Activated CD8-positive, alpha-beta T cell treated with anti-CD3 and anti-CD28 coated beads for 36 hours (primary cell): ENCODE measurements at regions of chr10 and their contacts with region 1.

Region 1: DNA sequence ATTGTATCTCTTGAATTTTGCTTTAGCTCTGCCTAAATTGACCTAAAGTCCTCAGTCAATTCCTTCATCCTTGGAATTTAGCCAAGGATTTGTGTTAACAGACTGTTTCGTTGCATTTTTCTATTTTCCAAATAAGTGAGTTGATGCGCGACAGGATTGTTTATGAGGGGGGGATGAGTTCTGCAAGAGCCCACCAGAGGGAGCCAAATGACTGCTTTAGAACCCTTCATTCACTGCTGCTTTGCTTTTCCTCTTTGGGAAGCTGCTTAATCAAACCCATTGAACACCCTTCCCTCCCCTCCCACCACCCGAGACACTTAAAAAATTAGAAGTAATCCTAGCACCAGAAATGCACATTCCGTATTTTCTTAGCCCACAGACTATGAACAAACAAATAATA is 33.7 kb upstream of the PTF1A start:
- DNase-seq: peak; percentile 66
- ATAC-seq: peak; percentile 66
- H3K4me3 Mint-ChIP-seq: no peak overlapping the region
- H3K27ac Mint-ChIP-seq: no peak overlapping the region
- H3K4me1 Mint-ChIP-seq: peaks cover 3% of the 10 kb centered on the region
- H3K27me3 Mint-ChIP-seq: peaks cover 23% of the 10 kb centered on the region
- CTCF ChIP-seq: peak; percentile 92

Region 2: DNA sequence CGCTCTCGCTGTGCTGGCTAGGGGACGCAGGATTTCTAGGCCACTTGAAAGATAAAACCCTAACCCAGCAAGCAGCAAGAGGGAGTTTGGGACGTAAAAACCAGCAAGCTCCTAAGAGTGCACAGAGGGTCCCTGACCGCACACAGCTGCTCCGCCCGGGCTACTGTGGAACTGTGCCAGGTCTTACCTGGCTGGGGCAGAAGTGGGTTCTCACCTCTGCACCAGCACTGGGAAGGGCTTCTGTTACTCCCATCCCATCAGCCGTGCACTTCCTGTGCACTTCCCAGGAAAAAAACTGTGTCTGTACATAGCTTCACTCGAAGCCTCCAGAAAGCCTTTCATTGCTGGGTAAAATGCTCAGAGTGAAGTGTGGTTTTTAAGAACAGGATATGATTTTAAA is 12.1 kb before region 1 on chr10:
- CTCF ChIA-PET with region 1: interaction called, 20 read pairs
- POLR2A ChIA-PET with region 1: no interaction called
- intact Hi-C with region 1: no loop called
- DNase-seq: no peak
- ATAC-seq: no peak
- H3K4me3 Mint-ChIP-seq: no peak overlapping the region
- H3K27ac Mint-ChIP-seq: no peak overlapping the region
- H3K4me1 Mint-ChIP-seq: no peaks in the 10 kb centered on the region
- H3K27me3 Mint-ChIP-seq: peaks cover 10% of the 10 kb centered on the region
- CTCF ChIP-seq: no peak

Region 3: DNA sequence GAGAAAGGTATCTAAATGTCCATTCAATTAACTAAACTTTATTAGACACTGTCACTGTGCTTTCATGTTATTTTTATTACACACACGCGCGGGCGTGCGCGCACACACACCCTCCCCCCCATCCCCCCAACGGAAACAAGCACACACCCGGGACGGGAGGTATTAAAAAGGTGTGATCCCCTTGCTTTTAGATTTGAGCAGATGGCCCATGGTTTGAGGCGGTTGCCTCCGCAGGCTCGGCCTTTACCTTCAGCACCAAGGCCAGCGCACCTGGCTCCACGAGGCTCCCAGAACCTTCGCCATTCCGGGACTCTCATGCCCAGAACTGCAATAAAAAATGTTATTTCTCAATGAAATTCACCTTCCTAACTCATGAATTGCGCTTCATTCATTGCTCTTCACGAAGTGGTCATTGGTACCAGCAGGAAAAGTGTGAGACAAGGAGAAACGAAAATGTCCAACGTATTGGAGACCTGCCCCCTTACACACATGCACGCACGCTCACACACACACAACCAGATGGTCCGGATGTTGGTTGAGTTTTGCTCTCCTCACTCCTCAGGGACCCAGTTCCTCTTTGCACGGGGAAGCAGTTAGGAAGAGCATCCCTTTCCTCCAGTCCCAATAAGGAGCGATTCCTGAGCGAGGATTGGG is 13.0 kb after region 1 on chr10:
- CTCF ChIA-PET with region 1: interaction called, 21 read pairs
- POLR2A ChIA-PET with region 1: no interaction called
- intact Hi-C with region 1: no loop called
- DNase-seq: no peak
- ATAC-seq: no peak
- H3K4me3 Mint-ChIP-seq: no peak overlapping the region
- H3K27ac Mint-ChIP-seq: no peak overlapping the region
- H3K4me1 Mint-ChIP-seq: peaks cover 6% of the 10 kb centered on the region
- H3K27me3 Mint-ChIP-seq: peaks cover 54% of the 10 kb centered on the region
- CTCF ChIP-seq: no peak

Region 4: GRCh38 chr10:23280420-23281043 is 122.2 kb after region 1 on chr10:
- CTCF ChIA-PET with region 1: interaction called, 11 read pairs
- POLR2A ChIA-PET with region 1: no interaction called
- intact Hi-C with region 1: no loop called
- DNase-seq: no peak
- ATAC-seq: no peak
- H3K4me3 Mint-ChIP-seq: no peak overlapping the region
- H3K27ac Mint-ChIP-seq: no peak overlapping the region
- H3K4me1 Mint-ChIP-seq: no peaks in the 10 kb centered on the region
- H3K27me3 Mint-ChIP-seq: peaks cover 18% of the 10 kb centered on the region
- CTCF ChIP-seq: no peak

Region 5: GRCh38 chr10:23293145-23293724 is 134.9 kb after region 1 on chr10:
- CTCF ChIA-PET with region 1: interaction called, 104 read pairs
- POLR2A ChIA-PET with region 1: no interaction called
- intact Hi-C with region 1: loop called (anchors 2 kb)
- DNase-seq: peak; percentile 76
- ATAC-seq: peak; percentile 78
- H3K4me3 Mint-ChIP-seq: no peak overlapping the region
- H3K27ac Mint-ChIP-seq: no peak overlapping the region
- H3K4me1 Mint-ChIP-seq: peaks cover 2% of the 10 kb centered on the region
- H3K27me3 Mint-ChIP-seq: peaks cover 12% of the 10 kb centered on the region
- CTCF ChIP-seq: peak; percentile 70

Region 6: DNA sequence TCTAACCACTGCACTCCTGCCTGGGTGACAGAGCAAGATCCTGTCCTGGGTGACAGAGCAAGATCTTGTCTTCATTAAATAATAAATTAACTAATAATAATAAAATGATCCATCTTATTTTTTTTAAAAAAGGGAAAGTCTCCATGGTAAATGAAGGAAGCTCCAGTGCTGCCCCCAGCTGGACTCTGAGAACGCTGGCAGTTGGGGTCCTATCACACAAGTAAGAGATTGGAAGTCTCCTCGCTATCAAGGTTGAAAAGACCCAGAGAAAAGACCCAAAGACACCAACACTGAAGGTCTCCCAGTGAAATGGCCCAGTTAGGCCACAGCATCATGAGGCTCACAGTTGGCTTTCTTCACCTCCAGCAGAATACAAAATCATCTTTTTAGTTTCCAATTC is 200.0 kb after region 1 on chr10:
- CTCF ChIA-PET with region 1: no interaction called
- POLR2A ChIA-PET with region 1: no interaction called
- intact Hi-C with region 1: no loop called
- DNase-seq: no peak
- ATAC-seq: no peak
- H3K4me3 Mint-ChIP-seq: no peak overlapping the region
- H3K27ac Mint-ChIP-seq: no peak overlapping the region
- H3K4me1 Mint-ChIP-seq: peaks cover 17% of the 10 kb centered on the region
- H3K27me3 Mint-ChIP-seq: no peaks in the 10 kb centered on the region
- CTCF ChIP-seq: no peak